ENCODE measurements at regions of chr9 and their contacts with region 1.

Region 1: DNA sequence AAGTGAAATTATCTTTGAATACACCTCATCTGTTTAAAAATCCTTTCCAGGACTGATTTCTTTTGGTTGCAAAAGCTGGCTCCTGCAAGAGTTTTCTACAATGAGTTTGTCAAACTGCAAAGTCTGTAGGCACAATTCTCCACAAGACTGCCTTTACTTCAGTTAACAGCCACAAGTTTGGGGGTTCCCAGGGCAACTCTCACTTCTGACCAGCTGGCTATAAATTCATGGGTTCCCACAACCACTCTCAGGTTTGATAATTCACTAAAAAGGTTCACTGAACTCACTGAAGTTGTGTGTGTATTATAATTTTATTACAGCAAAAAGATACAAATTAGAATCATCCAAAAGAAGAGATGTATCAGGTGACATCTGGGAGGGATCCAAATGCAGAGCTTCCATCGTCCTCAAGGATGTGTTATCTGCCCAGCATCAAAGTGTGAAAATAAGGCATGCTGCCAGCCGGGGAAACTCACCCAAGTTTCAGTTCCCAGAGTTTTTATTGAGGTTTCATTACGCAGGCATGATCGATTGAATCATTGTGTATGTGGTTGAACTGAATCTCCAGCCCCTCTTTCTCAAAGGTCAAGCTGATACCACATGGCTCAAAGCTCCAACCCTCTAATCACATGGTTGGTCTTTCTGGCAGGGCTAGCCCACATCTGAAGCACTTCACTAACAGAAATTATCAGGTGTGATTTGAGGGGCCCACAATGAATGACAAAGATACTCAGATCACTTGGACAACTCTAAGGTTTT is 19.0 kb upstream of the PSIP1 start:
- DNase-seq: no peak
- ATAC-seq: no peak
- H3K4me3 ChIP-seq: no peak overlapping the region
- H3K27ac ChIP-seq: no peak overlapping the region
- H3K4me1 ChIP-seq: peaks cover 0 to 3% of the 10 kb centered on the region in 2 experiments; a peak in 1 of 5 replicates
- H3K27me3 ChIP-seq: no peaks in the 10 kb centered on the region
- CTCF ChIP-seq: no peak
- EP300 ChIP-seq: no peak
- POLR2A ChIP-seq: no peak
- RAD21 ChIP-seq: no peak

Region 2: GRCh38 chr9:15191378-15191777 is 338.4 kb before region 1 on chr9:
- CTCF ChIA-PET with region 1: no interaction called
- POLR2A ChIA-PET with region 1: no interaction called
- in situ Hi-C with region 1: loop called (anchors 10 kb)
- intact Hi-C with region 1: no loop called
- DNase-seq: no peak
- ATAC-seq: no peak
- H3K4me3 ChIP-seq: no peak overlapping the region
- H3K27ac ChIP-seq: no peak overlapping the region
- H3K4me1 ChIP-seq: no peaks in the 10 kb centered on the region
- H3K27me3 ChIP-seq: no peaks in the 10 kb centered on the region
- CTCF ChIP-seq: no peak
- EP300 ChIP-seq: no peak
- POLR2A ChIP-seq: no peak
- RAD21 ChIP-seq: no peak

Region 3: GRCh38 chr9:15277400-15278090 is 252.2 kb before region 1 on chr9:
- CTCF ChIA-PET with region 1: no interaction called
- POLR2A ChIA-PET with region 1: no interaction called
- in situ Hi-C with region 1: no loop called
- intact Hi-C with region 1: loop called (anchors 10 kb)
- DNase-seq: peak in 1 of 4 experiments; percentile 9
- ATAC-seq: peak; percentile 47; the same call in 1 of the 3 replicates
- H3K4me3 ChIP-seq: no peak overlapping the region
- H3K27ac ChIP-seq: no peak overlapping the region
- H3K4me1 ChIP-seq: no peaks in the 10 kb centered on the region
- H3K27me3 ChIP-seq: no peaks in the 10 kb centered on the region; a peak in 2 of 5 replicates
- CTCF ChIP-seq: peak in 2 of 3 experiments; percentile 17 to 53; a peak in 2 of 6 replicates
- EP300 ChIP-seq: no peak
- POLR2A ChIP-seq: no peak
- RAD21 ChIP-seq: peak; percentile 59 to 62

Region 4: DNA sequence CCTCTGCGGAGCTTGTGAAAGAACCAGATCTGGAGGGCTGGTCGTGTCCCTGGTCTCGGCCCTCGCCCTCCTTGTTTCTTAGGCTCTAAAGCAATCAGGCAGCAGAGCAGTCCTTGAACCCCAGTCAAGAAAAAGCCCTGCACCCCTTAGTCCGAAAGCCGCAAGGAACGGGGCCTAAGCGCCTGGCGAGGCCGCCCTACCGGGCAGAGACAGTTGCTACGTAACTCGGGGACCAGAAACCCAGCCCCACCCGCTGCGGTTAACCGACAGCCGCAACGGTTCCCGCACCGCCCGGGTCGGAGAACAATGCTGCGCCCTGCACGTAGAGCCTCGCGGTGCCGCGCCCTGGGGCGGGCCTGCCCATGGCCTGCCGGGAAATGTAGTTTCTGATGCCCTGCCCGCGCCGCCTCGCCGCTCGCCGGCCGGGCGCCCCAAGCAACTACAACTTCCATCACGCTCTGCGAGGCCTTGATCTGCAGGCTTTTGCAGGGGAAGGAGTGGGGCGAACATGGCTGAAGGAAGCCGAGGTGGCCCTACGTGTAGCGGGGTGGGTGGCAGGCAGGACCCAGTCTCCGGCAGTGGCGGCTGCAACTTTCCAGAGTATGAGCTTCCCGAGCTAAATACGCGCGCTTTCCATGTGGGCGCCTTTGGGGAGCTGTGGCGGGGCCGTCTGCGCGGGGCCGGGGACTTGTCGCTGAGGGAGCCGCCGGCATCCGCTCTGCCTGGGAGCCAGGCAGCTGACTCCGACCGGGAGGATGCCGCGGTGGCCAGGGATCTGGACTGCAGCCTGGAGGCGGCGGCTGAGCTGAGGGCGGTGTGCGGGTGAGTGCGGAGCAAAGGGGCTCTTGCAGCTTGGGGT is 107.1 kb before region 1 on chr9 and contains the start of gene SNAPC3:
- CTCF ChIA-PET with region 1: no interaction called
- POLR2A ChIA-PET with region 1: no interaction called
- in situ Hi-C with region 1: no loop called
- intact Hi-C with region 1: loop called (anchors 5 kb)
- DNase-seq: peak; percentile 76 to 93 (median 82)
- ATAC-seq: peak; percentile 98
- H3K4me3 ChIP-seq: peak within 1 kb of the TSS; percentile 96
- H3K27ac ChIP-seq: peak within 1 kb of the TSS; percentile 75
- H3K4me1 ChIP-seq: peaks cover 8 to 18% of the 10 kb centered on the region in 2 experiments; a peak in 4 of 5 replicates
- H3K27me3 ChIP-seq: no peaks in the 10 kb centered on the region
- CTCF ChIP-seq: 0 out of 6 replicates have a peak, but pooled peaks of 1 of the 3 experiments have one; percentile 10
- EP300 ChIP-seq: peak; percentile 56
- POLR2A ChIP-seq: peak; percentile 77
- RAD21 ChIP-seq: no peak
- polyA plus RNA-seq, gene SNAPC3: 2.3 to 3.4 TPM

Region 5: DNA sequence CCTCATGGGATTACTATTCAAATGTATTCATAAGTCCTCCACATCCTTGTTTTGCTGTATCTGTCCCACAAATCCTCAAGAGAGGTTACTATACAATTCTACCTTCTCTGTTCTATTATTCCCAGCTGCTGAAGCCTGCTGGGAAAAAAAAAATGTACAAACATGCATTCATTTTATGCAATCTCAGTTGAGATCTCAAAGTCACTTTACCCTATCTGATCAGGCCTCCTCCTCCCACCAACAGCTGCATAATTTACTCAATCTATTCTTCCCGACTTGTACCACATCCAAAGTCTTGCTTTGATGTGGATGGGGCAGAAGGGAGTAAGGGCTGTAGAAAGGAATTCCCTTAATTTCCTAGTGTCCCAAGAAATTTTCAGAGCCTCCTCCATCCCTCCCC is 47.6 kb before region 1 on chr9:
- CTCF ChIA-PET with region 1: no interaction called
- POLR2A ChIA-PET with region 1: no interaction called
- in situ Hi-C with region 1: no loop called
- intact Hi-C with region 1: no loop called
- DNase-seq: no peak
- ATAC-seq: no peak
- H3K4me3 ChIP-seq: no peak overlapping the region
- H3K27ac ChIP-seq: no peak overlapping the region
- H3K4me1 ChIP-seq: no peaks in the 10 kb centered on the region
- H3K27me3 ChIP-seq: no peaks in the 10 kb centered on the region
- CTCF ChIP-seq: no peak
- EP300 ChIP-seq: no peak
- POLR2A ChIP-seq: no peak
- RAD21 ChIP-seq: no peak

Measured in K562 (cell line).